Naive thymus-derived CD4-positive, alpha-beta T cell (primary cell): ENCODE measurements at regions of chr16 and their contacts with region 1.

Region 1: GRCh38 chr16:25093208-25094061 is 18.1 kb upstream of the LCMT1 start:
- DNase-seq: peak in 5 of 9 donors; percentile 15 to 49 (median 37)
- ATAC-seq: peak; percentile 68
- H3K4me3 ChIP-seq: no peak overlapping the region
- H3K4me3 Mint-ChIP-seq: peak overlapping the region; percentile 1 to 83 (median 62)
- H3K27ac ChIP-seq: peak overlapping the region; percentile 69
- H3K27ac Mint-ChIP-seq: peak overlapping the region; percentile 82 to 98 (median 92)
- H3K4me1 ChIP-seq: peaks cover 0 to 20% of the 10 kb centered on the region in 2 donors
- H3K4me1 Mint-ChIP-seq: peaks cover 21 to 44% (median 39%) of the 10 kb centered on the region in 7 donors
- H3K27me3 ChIP-seq: no peaks in the 10 kb centered on the region
- H3K27me3 Mint-ChIP-seq: no peaks in the 10 kb centered on the region

Region 2: GRCh38 chr16:24810951-24811843 is 282.2 kb before region 1 on chr16:
- CTCF ChIA-PET with region 1: no interaction called
- POLR2A ChIA-PET with region 1: no interaction called
- intact Hi-C with region 1: no loop called
- DNase-seq: no peak
- ATAC-seq: no peak
- H3K4me3 ChIP-seq: no peak overlapping the region
- H3K4me3 Mint-ChIP-seq: no peak overlapping the region
- H3K27ac ChIP-seq: no peak overlapping the region
- H3K27ac Mint-ChIP-seq: peak overlapping the region in 5 of 9 donors; percentile 3 to 28 (median 18)
- H3K4me1 ChIP-seq: no peaks in the 10 kb centered on the region
- H3K4me1 Mint-ChIP-seq: no peaks in the 10 kb centered on the region
- H3K27me3 ChIP-seq: no peaks in the 10 kb centered on the region
- H3K27me3 Mint-ChIP-seq: no peaks in the 10 kb centered on the region

Region 3: DNA sequence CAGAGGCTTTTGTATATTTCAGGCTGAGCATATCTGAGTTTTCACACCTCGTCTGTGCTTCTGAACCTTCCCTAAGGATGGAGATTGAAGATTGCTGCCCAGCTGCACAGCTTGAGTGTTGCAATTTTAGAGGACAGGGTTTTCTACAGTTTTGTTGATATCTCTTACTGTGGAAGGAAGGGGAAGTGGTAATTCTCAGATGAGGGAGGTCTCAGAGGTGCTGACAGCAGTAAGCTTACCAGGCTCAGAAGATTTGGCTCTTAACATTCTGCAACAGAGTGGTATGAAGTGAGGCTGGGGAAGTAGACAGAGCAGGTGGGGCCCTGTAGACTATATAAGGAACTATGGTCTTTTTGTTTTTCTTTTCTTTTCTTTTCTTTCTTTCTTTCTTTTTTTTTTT is 32.5 kb before region 1 on chr16:
- CTCF ChIA-PET with region 1: interaction called, 7 read pairs
- POLR2A ChIA-PET with region 1: interaction called, 22 read pairs
- intact Hi-C with region 1: loop called in 1 of 2 experiments (anchors 1 kb)
- DNase-seq: peak in 7 of 9 donors; percentile 52 to 85 (median 80)
- ATAC-seq: peak; percentile 98
- H3K4me3 ChIP-seq: peak overlapping the region; percentile 19
- H3K4me3 Mint-ChIP-seq: peak overlapping the region; percentile 67 to 89 (median 80)
- H3K27ac ChIP-seq: peak overlapping the region; percentile 71
- H3K27ac Mint-ChIP-seq: peak overlapping the region; percentile 90 to 100 (median 97)
- H3K4me1 ChIP-seq: peaks cover 22 to 45% of the 10 kb centered on the region in 2 donors
- H3K4me1 Mint-ChIP-seq: peaks cover 44 to 75% (median 66%) of the 10 kb centered on the region in 7 donors
- H3K27me3 ChIP-seq: no peaks in the 10 kb centered on the region
- H3K27me3 Mint-ChIP-seq: no peaks in the 10 kb centered on the region

Region 4: DNA sequence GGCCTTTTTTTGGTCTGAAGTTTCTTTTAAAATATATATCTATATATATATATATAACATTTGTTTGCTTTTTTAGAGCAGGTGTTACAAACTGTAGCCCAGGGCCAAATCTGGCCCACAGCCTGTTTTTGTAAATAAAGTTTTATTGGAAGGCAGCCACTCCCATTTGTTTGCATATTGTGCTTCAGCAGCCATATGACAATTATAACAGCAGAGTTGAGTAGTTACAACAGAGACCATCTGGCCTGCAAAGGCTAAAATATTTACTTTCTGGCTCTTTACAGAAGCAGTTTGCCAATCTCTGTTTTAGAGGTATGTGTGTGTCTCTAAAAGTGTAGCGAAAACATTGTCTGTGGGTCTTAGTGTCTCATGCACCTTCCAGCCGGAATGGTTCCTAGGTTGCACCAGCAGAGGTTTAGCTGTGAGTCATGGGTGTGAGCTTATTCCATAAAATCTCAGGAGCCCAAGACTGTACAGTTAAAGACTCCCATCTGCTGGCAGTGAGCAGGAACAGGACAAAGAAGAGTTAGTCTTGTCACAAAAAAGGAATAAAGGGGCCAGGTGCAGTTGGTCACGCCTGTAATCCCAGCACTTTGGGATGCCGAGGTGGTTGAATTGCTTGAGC is 41.9 kb after region 1 on chr16:
- CTCF ChIA-PET with region 1: no interaction called
- POLR2A ChIA-PET with region 1: no interaction called
- intact Hi-C with region 1: no loop called
- DNase-seq: no peak
- ATAC-seq: no peak
- H3K4me3 ChIP-seq: no peak overlapping the region
- H3K4me3 Mint-ChIP-seq: no peak overlapping the region
- H3K27ac ChIP-seq: no peak overlapping the region
- H3K27ac Mint-ChIP-seq: no peak overlapping the region
- H3K4me1 ChIP-seq: no peaks in the 10 kb centered on the region
- H3K4me1 Mint-ChIP-seq: peaks cover 0 to 6% (median 0%) of the 10 kb centered on the region in 7 donors
- H3K27me3 ChIP-seq: no peaks in the 10 kb centered on the region
- H3K27me3 Mint-ChIP-seq: no peaks in the 10 kb centered on the region